Calu3 (cell line): ENCODE measurements at regions of chr15 and their contacts with region 1.

Region 1: DNA sequence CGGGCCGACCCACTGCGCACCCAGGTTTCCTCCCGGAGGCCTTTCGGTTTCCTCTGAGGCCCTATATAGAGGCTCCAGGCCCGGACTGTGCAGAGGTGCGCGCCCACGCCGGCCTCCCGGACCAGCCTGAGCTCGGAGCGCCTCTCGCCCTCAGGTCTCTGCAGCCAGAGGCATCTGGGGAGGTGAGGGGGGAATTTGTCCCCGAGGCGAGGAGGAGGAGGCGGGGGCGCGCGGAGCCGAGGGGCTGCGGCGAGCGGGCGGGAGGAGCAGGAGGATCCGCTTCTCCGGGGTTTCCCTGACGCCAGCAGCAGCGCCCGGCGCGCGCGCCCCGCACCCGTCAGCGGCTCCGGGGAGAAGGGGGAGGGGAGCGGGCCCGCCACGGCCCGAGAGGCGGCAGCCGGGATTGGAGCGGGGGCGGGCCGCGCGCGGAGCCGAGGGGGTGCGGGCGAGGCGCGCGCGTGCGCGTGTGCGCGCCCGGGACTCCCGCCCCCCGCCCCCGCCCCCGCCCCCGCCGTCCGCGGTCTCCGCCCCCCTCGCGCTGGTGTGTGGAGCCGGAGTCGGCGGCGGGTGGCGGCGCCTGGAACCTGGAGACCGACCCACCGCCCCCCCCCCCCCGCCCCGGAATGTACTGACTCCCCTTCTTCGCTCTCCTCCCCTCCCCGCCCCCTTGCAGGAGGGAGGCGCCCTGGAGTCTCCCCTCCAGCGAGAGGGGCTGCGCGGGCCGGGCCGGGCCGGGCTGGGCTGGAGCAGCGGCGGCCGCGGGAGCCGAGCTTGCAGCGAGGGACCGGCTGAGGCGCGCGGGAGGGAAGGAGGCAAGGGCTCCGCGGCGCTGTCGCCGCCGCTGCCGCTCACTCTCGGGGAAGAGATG is at the start of gene NEO1:
- DNase-seq: peak; percentile 89
- H3K4me3 Mint-ChIP-seq: peak within 1 kb of the TSS; percentile 87
- H3K27ac Mint-ChIP-seq: peak within 1 kb of the TSS; percentile 78
- H3K4me1 Mint-ChIP-seq: peaks cover 6% of the 10 kb centered on the region
- H3K27me3 Mint-ChIP-seq: peaks cover 30% of the 10 kb centered on the region
- CTCF ChIP-seq: no peak
- total RNA-seq, gene NEO1: 20.4 and 35.1 TPM in 2 replicates

Region 2: DNA sequence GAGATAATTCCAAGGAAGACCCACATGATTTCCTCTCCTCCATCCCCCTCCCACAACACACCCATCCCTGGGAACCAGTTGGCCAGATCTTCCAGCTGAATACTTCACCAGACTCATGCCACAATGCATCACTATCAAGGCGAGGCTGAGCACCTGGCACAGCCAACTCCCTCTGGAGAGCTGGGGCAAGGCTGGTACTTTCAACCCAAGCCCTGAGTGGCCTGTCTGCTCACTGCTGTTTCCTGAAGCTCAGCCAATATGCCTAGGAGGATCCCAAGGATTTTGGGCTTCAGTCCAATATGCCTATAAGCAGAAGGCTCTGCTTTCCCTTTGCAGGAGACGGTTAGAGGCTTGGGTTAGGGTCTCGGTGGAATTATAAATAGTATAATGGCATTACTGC is 90.7 kb before region 1 on chr15:
- CTCF ChIA-PET with region 1: no interaction called
- intact Hi-C with region 1: no loop called
- DNase-seq: no peak
- H3K4me3 Mint-ChIP-seq: no peak overlapping the region
- H3K27ac Mint-ChIP-seq: no peak overlapping the region
- H3K4me1 Mint-ChIP-seq: no peaks in the 10 kb centered on the region
- H3K27me3 Mint-ChIP-seq: peaks cover 76% of the 10 kb centered on the region
- CTCF ChIP-seq: no peak

Region 3: DNA sequence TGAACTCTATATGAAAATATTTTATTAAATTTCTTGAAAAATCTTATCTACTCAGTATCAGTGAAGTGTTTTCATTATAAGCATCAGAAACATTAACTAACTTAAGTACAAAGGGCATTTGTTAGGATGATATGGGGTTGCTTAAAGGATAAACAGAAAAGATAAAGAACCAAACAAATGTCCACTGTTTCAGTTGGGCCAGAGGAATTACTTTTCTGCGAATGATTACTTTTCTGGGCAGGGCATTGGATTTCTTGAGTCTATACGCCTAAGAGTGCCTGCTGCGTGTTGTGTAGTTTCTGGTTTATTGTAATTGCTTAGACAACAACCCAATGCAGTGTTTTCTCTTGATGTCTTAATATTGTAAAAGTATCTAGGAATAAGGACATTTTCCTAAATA is 53.0 kb after region 1 on chr15:
- CTCF ChIA-PET with region 1: interaction called, 11 read pairs
- intact Hi-C with region 1: no loop called
- DNase-seq: no peak
- H3K4me3 Mint-ChIP-seq: no peak overlapping the region
- H3K27ac Mint-ChIP-seq: no peak overlapping the region
- H3K4me1 Mint-ChIP-seq: no peaks in the 10 kb centered on the region
- H3K27me3 Mint-ChIP-seq: no peaks in the 10 kb centered on the region
- CTCF ChIP-seq: no peak